ENCODE measurements at regions of chr7 and their contacts with region 1.

Region 1: DNA sequence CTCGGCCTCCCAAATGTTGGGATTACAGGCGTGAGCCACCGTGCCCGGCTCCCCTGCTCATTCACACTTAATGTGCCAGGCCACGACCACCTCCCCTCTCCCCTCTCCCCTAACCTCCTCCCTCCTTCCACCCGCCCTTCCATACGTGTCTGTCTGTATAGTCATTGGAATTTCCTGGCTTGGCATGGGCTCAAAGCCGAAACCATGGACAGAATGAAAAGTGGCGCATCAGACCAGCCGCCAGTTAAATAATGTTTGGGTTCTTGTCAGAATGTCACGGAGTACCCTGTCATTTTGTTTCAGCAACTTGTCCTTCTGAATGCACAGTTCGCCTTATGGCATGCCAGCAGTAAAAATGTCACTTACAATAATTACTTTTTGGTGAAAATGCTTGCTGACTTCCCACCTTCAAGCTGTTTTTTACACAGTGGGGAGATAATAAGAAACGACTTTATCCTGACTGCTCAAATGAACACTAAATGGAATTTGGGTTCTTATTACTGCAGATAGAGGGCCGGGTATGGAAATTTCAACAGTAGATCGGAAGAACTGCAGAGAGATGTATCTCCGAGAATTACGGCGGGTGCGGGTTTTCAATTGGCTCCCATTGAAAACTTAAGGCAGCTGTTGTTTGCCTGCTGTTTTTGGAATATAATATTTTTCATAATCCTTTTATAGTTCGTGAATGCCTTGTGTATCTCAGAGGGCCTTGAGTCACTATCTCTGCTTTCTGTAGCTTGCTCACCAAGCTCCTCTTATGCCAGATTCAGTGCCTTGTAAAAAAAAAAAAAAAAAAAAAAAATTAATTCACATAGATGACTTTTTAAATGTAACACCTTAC is 65.5 kb upstream of the SH2B2 start:
- DNase-seq: no peak
- H3K4me3 ChIP-seq: no peak overlapping the region
- H3K27me3 ChIP-seq: no peaks in the 10 kb centered on the region
- CTCF ChIP-seq: no peak

Region 2: GRCh38 chr7:101595766-101596537 is 625.2 kb before region 1 on chr7:
- CTCF ChIA-PET with region 1: no interaction called
- POLR2A ChIA-PET with region 1: interaction called, 18 read pairs
- DNase-seq: no peak
- H3K4me3 ChIP-seq: no peak overlapping the region
- H3K27me3 ChIP-seq: 0 out of 2 replicates have a peak, but pooled peaks cover 3% of the 10 kb centered on the region
- CTCF ChIP-seq: no peak

Region 3: GRCh38 chr7:102152672-102153585 is 68.3 kb before region 1 on chr7:
- CTCF ChIA-PET with region 1: no interaction called
- POLR2A ChIA-PET with region 1: no interaction called
- DNase-seq: no peak
- H3K4me3 ChIP-seq: no peak overlapping the region
- H3K27me3 ChIP-seq: no peaks in the 10 kb centered on the region
- CTCF ChIP-seq: no peak

Region 4: DNA sequence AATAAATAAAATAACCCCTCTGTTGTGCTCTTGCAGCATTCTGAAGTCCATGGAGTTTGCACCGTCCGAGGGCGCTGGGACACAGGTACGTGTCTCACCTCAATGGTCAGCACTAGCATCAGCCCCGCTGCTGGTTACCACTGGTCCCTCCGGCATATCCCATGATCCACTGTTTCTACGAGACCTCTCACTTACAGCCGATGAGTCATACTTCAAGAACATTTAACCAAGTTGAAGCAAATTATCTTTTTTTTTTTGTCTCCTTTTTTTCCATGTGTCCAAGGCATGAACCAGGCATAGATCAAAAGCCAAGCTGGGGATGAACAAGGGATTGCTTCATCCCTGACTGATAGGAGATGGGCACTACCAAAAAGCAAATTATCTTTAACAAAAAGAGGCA is 27.4 kb before region 1 on chr7:
- CTCF ChIA-PET with region 1: no interaction called
- POLR2A ChIA-PET with region 1: no interaction called
- DNase-seq: no peak
- H3K4me3 ChIP-seq: no peak overlapping the region
- H3K27me3 ChIP-seq: no peaks in the 10 kb centered on the region
- CTCF ChIP-seq: no peak

Measured in BJ (cell line).